OCI-LY7 (cell line): ENCODE measurements at regions of chr1 and their contacts with region 1.

Region 1: DNA sequence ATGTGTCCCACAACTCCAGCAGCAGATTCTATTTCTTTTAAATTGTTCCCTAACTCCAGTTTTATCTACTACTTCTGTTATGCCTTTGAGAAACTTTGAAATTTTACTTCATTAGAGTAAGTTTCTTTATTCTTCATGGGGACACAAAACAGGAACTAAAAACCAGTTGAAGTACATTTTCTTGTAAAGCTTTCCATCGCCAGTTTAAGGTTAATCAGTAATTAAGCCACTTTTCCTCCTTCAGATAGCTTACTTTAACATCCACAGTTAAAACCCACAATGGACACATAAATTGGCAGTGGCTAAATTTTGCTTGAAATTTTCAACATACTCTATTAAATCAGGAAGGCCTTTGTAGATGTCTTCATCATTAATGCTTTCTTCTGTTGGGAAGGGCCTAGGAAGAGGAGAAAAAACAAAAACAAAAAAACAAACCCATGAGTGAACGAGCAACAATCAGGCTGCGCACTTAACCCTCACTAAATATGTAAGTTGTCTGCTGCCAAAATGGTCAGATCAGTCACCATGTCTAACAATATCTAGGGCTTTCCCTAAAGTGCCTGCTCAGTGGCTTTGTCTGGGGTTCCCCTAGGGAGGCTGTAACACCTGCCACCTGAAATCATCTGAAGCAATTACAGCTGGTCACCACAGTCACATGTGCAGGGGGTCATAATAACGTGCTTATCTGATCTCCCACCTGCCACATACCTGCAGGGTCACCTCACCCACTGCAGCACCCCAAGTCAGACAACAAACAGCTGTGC is 187.9 kb downstream of the VAV3 start:
- DNase-seq: peak; percentile 88
- H3K4me3 ChIP-seq: peak overlapping the region; percentile 30
- H3K27ac ChIP-seq: peak overlapping the region; percentile 72
- H3K4me1 ChIP-seq: peaks cover 42% of the 10 kb centered on the region
- CTCF ChIP-seq: no peak

Region 2: DNA sequence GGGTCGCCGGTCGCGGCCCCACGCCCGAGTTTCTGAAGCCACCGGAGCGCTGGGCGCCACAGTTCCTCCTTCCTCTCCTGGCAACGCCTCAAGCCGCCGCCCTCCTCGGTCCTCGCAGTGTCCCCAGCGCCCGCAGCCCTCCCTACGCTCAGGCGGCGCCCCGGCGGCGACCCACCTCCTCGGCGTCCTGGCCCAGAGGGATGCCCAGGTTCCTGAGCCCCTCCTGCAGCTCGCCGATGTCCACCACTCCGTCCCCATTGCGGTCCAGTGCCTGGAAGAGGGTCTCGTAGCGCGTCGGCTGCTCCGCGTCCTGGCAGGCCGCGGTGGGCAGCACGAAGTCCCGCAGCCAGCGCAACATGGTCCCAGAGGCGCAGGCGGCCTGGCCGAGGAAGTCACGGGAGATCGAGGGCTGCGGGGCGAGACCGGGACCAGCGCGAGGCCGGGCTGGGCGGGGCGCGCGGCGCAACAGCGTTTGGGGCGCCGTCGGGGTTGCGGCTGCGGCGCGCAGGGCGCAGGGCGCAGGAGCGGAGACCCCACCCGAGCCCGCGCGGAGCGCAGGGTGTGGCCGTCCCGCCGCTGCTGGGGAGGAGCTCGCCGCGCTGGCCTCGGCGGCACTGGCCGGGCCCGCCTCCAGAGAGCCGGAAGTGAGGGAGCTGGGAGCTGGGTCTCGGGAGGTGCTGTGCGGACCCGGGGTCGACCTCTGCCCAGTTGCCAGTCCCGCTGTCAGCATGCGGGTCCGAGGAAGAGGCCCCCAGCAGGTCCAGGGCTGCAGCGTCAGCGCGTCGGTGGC is 422.9 kb after region 1 on chr1 and contains the start of gene SLC25A24:
- CTCF ChIA-PET with region 1: no interaction called
- POLR2A ChIA-PET with region 1: no interaction called
- intact Hi-C with region 1: loop called (anchors 10 kb)
- DNase-seq: no peak
- H3K4me3 ChIP-seq: peak within 1 kb of the TSS; percentile 50
- H3K27ac ChIP-seq: no peak within 1 kb of the TSS
- H3K4me1 ChIP-seq: no peaks in the 10 kb centered on the region
- CTCF ChIP-seq: no peak
- total RNA-seq, gene SLC25A24: not detected in 2 replicates

Region 3: GRCh38 chr1:108327534-108328462 is 550.7 kb after region 1 on chr1:
- CTCF ChIA-PET with region 1: no interaction called
- POLR2A ChIA-PET with region 1: no interaction called
- intact Hi-C with region 1: loop called (anchors 10 kb)
- DNase-seq: no peak
- H3K4me3 ChIP-seq: no peak overlapping the region
- H3K27ac ChIP-seq: no peak overlapping the region
- H3K4me1 ChIP-seq: no peaks in the 10 kb centered on the region
- CTCF ChIP-seq: 0 out of 2 replicates have a peak, but pooled peaks have one; percentile 23